ENCODE measurements at regions of chr6 and their contacts with region 1.

Region 1: GRCh38 chr6:166751051-166751595 is 124.1 kb upstream of the RPS6KA2 start:
- DNase-seq: peak; percentile 13
- H3K4me3 Mint-ChIP-seq: no peak overlapping the region
- H3K27ac Mint-ChIP-seq: no peak overlapping the region
- H3K4me1 Mint-ChIP-seq: peaks cover 10% of the 10 kb centered on the region
- H3K27me3 Mint-ChIP-seq: no peaks in the 10 kb centered on the region

Region 2: GRCh38 chr6:166515072-166515810 is 235.9 kb before region 1 on chr6:
- CTCF ChIA-PET with region 1: no interaction called
- intact Hi-C with region 1: loop called (anchors 10 kb)
- DNase-seq: peak; percentile 78
- H3K4me3 Mint-ChIP-seq: no peak overlapping the region
- H3K27ac Mint-ChIP-seq: no peak overlapping the region
- H3K4me1 Mint-ChIP-seq: peaks cover 11% of the 10 kb centered on the region
- H3K27me3 Mint-ChIP-seq: no peaks in the 10 kb centered on the region

Measured in activated naive CD4-positive, alpha-beta T cell treated with anti-CD3 and anti-CD28 coated beads for 36 hours (primary cell).